ENCODE measurements at regions of chr1 and their contacts with region 1.

Region 1: DNA sequence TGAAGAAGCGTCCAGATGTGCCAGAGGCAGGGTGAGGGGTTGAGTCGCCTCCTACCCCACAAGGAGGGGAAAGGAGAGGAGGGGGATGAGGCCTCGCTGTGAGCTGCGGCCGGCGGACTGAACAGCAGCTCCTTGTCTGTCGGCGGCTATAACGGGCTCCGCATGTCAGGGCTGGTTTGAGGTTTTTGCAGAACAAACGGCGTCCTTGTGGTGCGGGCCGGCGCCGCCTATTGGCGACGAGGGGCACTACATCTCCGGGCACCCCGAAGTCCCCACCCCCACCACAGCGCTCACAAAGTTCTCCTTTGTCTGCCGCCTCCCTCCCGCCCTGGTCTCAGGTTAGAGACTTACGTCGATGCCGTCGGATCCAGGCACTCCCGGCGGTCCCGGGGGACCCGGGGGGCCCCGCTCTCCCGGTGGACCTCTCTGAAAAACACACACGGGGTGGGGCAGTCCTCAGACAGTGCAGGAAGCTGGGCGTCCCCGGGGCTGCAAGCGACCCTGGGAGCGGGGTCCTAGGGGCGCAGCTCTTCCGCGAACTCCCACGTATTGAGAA is 1.8 kb downstream of the COL9A2 start:
- DNase-seq: peak; percentile 91
- H3K4me3 ChIP-seq: peak overlapping the region; percentile 27 to 40
- H3K27ac ChIP-seq: no peak overlapping the region
- H3K4me1 ChIP-seq: peaks cover 11% of the 10 kb centered on the region
- H3K27me3 ChIP-seq: no peaks in the 10 kb centered on the region
- CTCF ChIP-seq: peak; percentile 82 to 97 (median 95)
- POLR2A ChIP-seq: no peak

Region 2: DNA sequence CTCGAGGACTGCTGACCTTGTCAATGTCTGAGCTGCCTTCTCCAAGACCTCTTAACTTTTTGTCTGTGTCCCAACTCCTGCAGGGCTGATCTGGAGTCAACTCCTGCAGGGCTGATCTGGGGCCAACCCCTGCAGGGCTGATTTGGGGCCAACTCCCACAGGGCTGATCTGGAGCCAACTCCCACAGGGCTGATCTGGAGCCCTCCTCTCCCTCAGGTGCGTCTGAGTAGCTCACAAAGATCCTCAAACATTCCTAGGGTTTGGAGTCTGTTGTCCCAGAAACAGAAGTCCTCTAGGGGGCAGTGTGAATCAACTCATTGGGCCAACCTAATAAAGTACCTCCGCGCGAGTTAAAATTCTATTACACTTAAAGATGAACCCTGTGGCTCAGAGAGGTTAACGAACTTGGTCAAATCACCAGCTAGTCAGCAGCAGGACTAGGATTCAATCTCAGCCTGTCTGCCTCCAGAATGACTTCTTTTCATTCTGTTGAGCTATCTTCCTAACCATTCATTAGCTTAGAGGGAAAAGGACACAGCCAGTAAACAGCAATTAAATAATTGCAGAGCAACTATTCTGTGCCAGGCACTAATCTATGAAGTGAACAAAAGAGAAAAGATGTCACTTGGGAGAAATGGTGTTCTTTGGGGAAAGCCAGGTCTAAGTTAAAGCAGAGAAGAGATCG is 171.3 kb before region 1 on chr1:
- intact Hi-C with region 1: loop called (anchors 10 kb)
- DNase-seq: peak; percentile 77
- H3K4me3 ChIP-seq: no peak overlapping the region
- H3K27ac ChIP-seq: no peak overlapping the region
- H3K4me1 ChIP-seq: no peaks in the 10 kb centered on the region
- H3K27me3 ChIP-seq: no peaks in the 10 kb centered on the region
- CTCF ChIP-seq: peak; percentile 52 to 66 (median 63)
- POLR2A ChIP-seq: no peak

Region 3: GRCh38 chr1:40373338-40374283 is 58.3 kb after region 1 on chr1 and contains the start of gene SMAP2:
- intact Hi-C with region 1: no loop called
- DNase-seq: peak; percentile 97
- H3K4me3 ChIP-seq: peak within 1 kb of the TSS; percentile 94 to 100
- H3K27ac ChIP-seq: peak within 1 kb of the TSS; percentile 66 to 88
- H3K4me1 ChIP-seq: peaks cover 8% of the 10 kb centered on the region
- H3K27me3 ChIP-seq: no peaks in the 10 kb centered on the region
- CTCF ChIP-seq: no peak
- POLR2A ChIP-seq: peak; percentile 13
- total RNA-seq, gene SMAP2: 23.0 to 27.1 TPM

Region 4: DNA sequence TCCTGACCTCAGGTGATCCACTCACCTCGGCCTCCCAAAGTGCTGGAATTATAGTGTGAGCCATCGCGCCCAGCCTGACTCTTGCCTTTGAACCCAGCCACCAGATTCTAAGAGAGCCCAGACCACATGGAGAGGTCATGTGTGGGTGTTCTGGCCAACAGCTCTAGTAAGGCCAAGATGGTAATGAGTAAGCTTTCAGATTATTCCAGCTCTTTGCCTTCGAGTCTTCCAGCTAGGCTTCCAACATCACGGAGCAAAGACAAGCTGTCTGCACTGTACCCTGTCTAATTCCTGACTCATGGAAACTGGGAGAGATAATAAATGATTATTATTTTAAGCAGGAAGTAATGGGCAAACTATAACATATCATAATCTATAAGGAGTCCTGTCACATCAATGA is 120.2 kb after region 1 on chr1:
- intact Hi-C with region 1: no loop called
- DNase-seq: no peak
- H3K4me3 ChIP-seq: no peak overlapping the region
- H3K27ac ChIP-seq: no peak overlapping the region
- H3K4me1 ChIP-seq: no peaks in the 10 kb centered on the region
- H3K27me3 ChIP-seq: no peaks in the 10 kb centered on the region
- CTCF ChIP-seq: no peak
- POLR2A ChIP-seq: no peak